ENCODE measurements at regions of chr7 and their contacts with region 1.

Region 1: DNA sequence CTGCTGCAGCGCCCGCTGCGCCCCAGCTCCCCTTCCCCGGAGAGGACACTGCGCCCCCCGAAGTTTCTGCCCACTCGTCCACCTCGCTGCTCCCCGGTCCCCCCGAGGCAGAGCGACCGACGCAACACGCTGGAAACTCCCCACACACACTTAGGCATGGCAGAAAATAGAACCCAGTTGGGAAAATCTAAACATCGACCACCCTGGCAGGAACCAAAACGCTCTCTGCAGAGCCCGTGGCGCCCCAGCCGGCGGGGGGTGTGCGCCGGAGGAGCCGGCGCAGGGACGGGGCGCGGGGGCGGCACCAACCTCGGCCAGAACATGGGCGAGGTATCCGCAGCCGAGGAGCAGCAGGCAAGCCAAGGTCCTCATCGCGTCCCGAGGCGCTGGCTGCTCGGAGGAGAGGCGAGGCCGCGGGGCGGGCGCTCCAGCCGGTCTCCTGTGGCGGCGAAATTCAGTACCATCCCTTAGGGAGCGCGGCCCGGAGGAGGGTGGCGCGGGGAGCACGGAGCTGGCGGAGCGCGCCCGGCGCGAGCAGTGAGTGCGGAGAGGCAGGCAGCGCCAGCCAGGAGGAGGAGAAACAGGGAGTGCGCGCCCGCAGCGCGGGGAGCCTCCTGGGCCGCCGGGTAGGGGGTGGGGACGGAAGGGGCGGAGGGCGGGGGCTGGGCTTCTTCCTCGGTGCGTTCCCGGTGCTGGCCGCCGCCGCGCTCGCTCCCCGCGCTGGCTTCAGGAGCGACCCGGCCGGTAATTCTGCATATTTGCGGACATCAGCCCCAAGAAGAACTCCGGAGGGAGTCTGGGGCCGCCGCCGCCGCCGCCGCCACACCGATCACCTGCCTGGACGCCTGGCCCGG is 789 bp downstream of the PDGFA start:
- DNase-seq: peak; percentile 31
- H3K4me3 Mint-ChIP-seq: peak overlapping the region; percentile 85
- H3K27ac Mint-ChIP-seq: peak overlapping the region; percentile 33
- H3K4me1 Mint-ChIP-seq: peaks cover 10% of the 10 kb centered on the region
- H3K27me3 Mint-ChIP-seq: peaks cover 41% of the 10 kb centered on the region

Region 2: GRCh38 chr7:362402-363096 is 156.3 kb before region 1 on chr7:
- intact Hi-C with region 1: loop called (anchors 10 kb)
- DNase-seq: peak; percentile 31
- H3K4me3 Mint-ChIP-seq: peak overlapping the region; percentile 67
- H3K27ac Mint-ChIP-seq: peak overlapping the region; percentile 81
- H3K4me1 Mint-ChIP-seq: peaks cover 46% of the 10 kb centered on the region
- H3K27me3 Mint-ChIP-seq: peaks cover 4% of the 10 kb centered on the region

Region 3: GRCh38 chr7:584122-584465 is 65.2 kb after region 1 on chr7:
- intact Hi-C with region 1: loop called (anchors 5 kb)
- DNase-seq: peak; percentile 88
- H3K4me3 Mint-ChIP-seq: peak overlapping the region; percentile 85
- H3K27ac Mint-ChIP-seq: peak overlapping the region; percentile 95
- H3K4me1 Mint-ChIP-seq: peaks cover 33% of the 10 kb centered on the region
- H3K27me3 Mint-ChIP-seq: no peaks in the 10 kb centered on the region

Region 4: GRCh38 chr7:726084-726853 is 207.4 kb after region 1 on chr7 and contains the start of gene DNAAF5:
- intact Hi-C with region 1: loop called (anchors 2 kb)
- DNase-seq: peak; percentile 85
- H3K4me3 Mint-ChIP-seq: peak within 1 kb of the TSS; percentile 92
- H3K27ac Mint-ChIP-seq: peak within 1 kb of the TSS; percentile 91
- H3K4me1 Mint-ChIP-seq: peaks cover 17% of the 10 kb centered on the region
- H3K27me3 Mint-ChIP-seq: no peaks in the 10 kb centered on the region
- total RNA-seq, gene DNAAF5: 41.5 and 41.7 TPM in 2 replicates

Region 5: GRCh38 chr7:876167-876967 is 357.5 kb after region 1 on chr7 and contains the start of gene GET4:
- intact Hi-C with region 1: no loop called
- DNase-seq: peak; percentile 96
- H3K4me3 Mint-ChIP-seq: peak within 1 kb of the TSS; percentile 90
- H3K27ac Mint-ChIP-seq: peak within 1 kb of the TSS; percentile 80
- H3K4me1 Mint-ChIP-seq: peaks cover 18% of the 10 kb centered on the region
- H3K27me3 Mint-ChIP-seq: no peaks in the 10 kb centered on the region
- total RNA-seq, gene GET4: 32.2 and 35.9 TPM in 2 replicates

Region 6: DNA sequence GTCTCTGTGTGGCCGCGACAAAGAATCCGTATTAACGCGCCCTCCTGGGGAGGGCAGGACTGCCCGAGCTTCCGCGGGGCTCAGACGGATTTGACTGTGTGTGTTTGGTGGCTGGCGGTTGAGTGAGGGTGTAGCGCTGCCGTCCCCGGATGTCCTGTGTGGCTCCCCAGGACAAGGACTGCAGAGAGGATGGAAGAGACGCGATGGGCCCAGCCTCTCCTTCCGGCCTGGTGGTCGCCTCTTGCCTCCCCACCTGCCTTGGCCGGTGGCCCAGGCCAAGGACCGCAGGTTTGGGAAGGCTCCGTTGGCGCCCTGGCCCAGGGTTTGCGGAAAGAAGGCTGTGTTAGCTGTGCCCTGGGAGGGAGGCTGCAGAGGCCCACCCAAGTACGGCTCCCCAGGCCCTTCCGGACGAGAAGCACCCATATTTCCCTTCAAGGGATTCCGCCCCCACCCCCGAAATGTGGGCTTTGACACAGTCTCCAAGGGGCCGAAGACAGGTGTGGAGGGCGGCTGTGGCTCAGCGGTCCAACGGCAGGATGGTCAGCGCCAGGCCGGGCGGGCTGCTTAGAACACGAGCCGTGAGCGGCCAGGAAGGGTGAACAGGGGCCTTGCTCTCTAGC is 716.1 kb after region 1 on chr7:
- intact Hi-C with region 1: loop called (anchors 5 kb)
- DNase-seq: no peak
- H3K4me3 Mint-ChIP-seq: no peak overlapping the region
- H3K27ac Mint-ChIP-seq: peak overlapping the region; percentile 58
- H3K4me1 Mint-ChIP-seq: peaks cover 2% of the 10 kb centered on the region
- H3K27me3 Mint-ChIP-seq: peaks cover 52% of the 10 kb centered on the region

Measured in activated T-helper 2 cell treated with anti-CD3 and anti-CD28 coated beads, Interferon-gamma antibody, Interleukin-2, Interleukin-4, amounts not matched to agents 10 μg/mL and 5 μg/mL and 100 μg/mL, durations not matched to agents 14 hours and 24 hours and 36 hours (primary cell).